ENCODE measurements at regions of chr4 and their contacts with region 1.

Region 1: GRCh38 chr4:113547487-113548042 is 214.0 kb downstream of the CAMK2D start:
- DNase-seq: peak; percentile 94
- H3K4me3 Mint-ChIP-seq: no peak overlapping the region
- H3K27ac Mint-ChIP-seq: peak overlapping the region; percentile 45
- H3K4me1 Mint-ChIP-seq: peaks cover 19% of the 10 kb centered on the region
- H3K27me3 Mint-ChIP-seq: no peaks in the 10 kb centered on the region

Region 2: DNA sequence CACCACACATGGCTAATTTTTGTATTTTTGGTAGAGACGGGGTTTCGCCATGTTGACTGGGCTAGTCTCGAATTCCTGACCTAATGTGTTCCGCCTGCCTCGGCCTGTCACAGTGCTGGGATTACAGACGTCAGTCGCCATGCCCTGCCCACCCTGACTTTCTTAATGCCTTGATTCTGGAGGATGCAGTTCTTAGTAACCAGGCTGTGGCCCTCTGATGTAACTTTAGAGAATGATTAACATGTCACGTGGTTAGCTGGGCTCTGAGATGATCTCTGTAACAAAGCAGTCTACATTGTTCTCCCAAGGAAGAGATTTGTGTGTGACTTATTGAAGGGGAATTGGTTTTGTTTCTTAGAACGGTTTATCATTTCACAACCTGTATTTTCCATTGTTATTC is 467.5 kb before region 1 on chr4:
- CTCF ChIA-PET with region 1: no interaction called
- POLR2A ChIA-PET with region 1: no interaction called
- DNase-seq: no peak
- H3K4me3 Mint-ChIP-seq: no peak overlapping the region
- H3K27ac Mint-ChIP-seq: no peak overlapping the region
- H3K4me1 Mint-ChIP-seq: no peaks in the 10 kb centered on the region
- H3K27me3 Mint-ChIP-seq: no peaks in the 10 kb centered on the region

Region 3: GRCh38 chr4:113564493-113564892 is 16.9 kb after region 1 on chr4:
- CTCF ChIA-PET with region 1: interaction called, 30 read pairs
- POLR2A ChIA-PET with region 1: interaction called, 31 read pairs
- DNase-seq: no peak
- H3K4me3 Mint-ChIP-seq: no peak overlapping the region
- H3K27ac Mint-ChIP-seq: peak overlapping the region; percentile 56
- H3K4me1 Mint-ChIP-seq: peaks cover 36% of the 10 kb centered on the region
- H3K27me3 Mint-ChIP-seq: peaks cover 4% of the 10 kb centered on the region

Region 4: DNA sequence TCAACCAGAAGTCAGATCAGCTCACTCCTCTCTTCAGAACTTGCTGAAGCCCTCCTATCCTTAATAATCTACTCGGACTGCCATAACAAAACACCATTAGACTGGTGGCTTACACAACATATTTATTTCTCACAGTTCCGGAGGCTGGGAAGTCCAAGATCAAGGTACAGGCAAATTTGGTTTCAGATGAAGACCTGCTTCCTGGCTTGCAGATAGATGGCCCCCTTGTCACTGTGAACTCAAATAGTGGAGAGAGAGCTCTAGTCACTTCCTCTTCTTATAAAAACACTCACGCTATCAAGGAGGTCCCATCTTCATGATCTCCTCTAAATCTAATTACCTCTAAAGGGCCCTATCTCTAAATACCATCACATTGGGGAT is 88.9 kb after region 1 on chr4:
- CTCF ChIA-PET with region 1: interaction called, 17 read pairs
- POLR2A ChIA-PET with region 1: interaction called, 9 read pairs
- DNase-seq: peak; percentile 17
- H3K4me3 Mint-ChIP-seq: peak overlapping the region; percentile 41
- H3K27ac Mint-ChIP-seq: peak overlapping the region; percentile 70
- H3K4me1 Mint-ChIP-seq: peaks cover 41% of the 10 kb centered on the region
- H3K27me3 Mint-ChIP-seq: no peaks in the 10 kb centered on the region

Region 5: DNA sequence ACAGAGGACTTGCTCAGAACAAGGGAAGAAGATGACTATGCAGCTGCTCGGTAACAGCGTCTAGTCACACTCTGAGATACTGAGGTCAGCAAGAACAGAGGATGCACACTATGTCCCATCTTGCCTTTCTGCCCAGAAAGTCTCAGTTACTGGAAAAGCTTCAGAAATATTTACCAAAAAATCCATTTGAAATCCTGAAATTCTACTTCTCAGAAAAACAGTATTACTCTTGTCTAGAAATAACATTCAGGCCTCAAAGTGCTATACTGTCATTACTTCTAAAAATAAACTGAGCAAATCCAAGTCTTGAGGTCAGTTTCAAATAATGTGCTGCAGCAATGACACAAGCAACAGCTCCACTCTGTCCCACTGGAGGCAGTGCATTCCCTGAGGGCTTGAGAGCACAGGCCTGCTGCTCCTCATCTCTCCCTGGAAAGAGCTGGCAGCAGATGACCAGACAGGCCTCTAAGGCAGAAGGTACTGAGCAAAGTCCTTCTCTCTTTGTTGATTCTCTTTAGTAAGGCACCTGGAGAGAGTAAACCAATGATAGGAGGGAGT is 137.0 kb after region 1 on chr4:
- CTCF ChIA-PET with region 1: interaction called, 14 read pairs
- POLR2A ChIA-PET with region 1: interaction called, 7 read pairs
- DNase-seq: peak; percentile 42
- H3K4me3 Mint-ChIP-seq: no peak overlapping the region
- H3K27ac Mint-ChIP-seq: peak overlapping the region; percentile 85
- H3K4me1 Mint-ChIP-seq: peaks cover 56% of the 10 kb centered on the region
- H3K27me3 Mint-ChIP-seq: no peaks in the 10 kb centered on the region

Region 6: GRCh38 chr4:113761620-113762185 is 214.1 kb after region 1 on chr4 and contains the start of gene CAMK2D:
- CTCF ChIA-PET with region 1: interaction called, 9 read pairs
- POLR2A ChIA-PET with region 1: interaction called, 28 read pairs
- DNase-seq: peak; percentile 81
- H3K4me3 Mint-ChIP-seq: peak within 1 kb of the TSS; percentile 83
- H3K27ac Mint-ChIP-seq: peak within 1 kb of the TSS; percentile 100
- H3K4me1 Mint-ChIP-seq: peaks cover 30% of the 10 kb centered on the region
- H3K27me3 Mint-ChIP-seq: no peaks in the 10 kb centered on the region
- total RNA-seq, gene CAMK2D: 41.7 to 43.0 TPM

Measured in activated CD4-positive, alpha-beta memory T cell treated with anti-CD3 and anti-CD28 coated beads, Interleukin-2, amount 10 ng/mL, durations not matched to agents 7 days and 5 days (primary cell).